ENCODE measurements at regions of chr16 and their contacts with region 1.

Region 1: GRCh38 chr16:84795329-84796053 is 24.3 kb upstream of the CRISPLD2 start:
- DNase-seq: no peak
- ATAC-seq: no peak
- H3K4me3 ChIP-seq: no peak overlapping the region
- H3K27ac ChIP-seq: no peak overlapping the region
- H3K4me1 ChIP-seq: no peaks in the 10 kb centered on the region
- H3K27me3 ChIP-seq: no peaks in the 10 kb centered on the region
- CTCF ChIP-seq: no peak
- EP300 ChIP-seq: no peak
- POLR2A ChIP-seq: no peak
- RAD21 ChIP-seq: no peak

Region 2: GRCh38 chr16:84746882-84747281 is 48.6 kb before region 1 on chr16:
- CTCF ChIA-PET with region 1: no interaction called
- POLR2A ChIA-PET with region 1: no interaction called
- in situ Hi-C with region 1: loop called (anchors 5 kb)
- intact Hi-C with region 1: no loop called
- DNase-seq: no peak
- ATAC-seq: peak; percentile 65
- H3K4me3 ChIP-seq: no peak overlapping the region
- H3K27ac ChIP-seq: no peak overlapping the region
- H3K4me1 ChIP-seq: no peaks in the 10 kb centered on the region
- H3K27me3 ChIP-seq: no peaks in the 10 kb centered on the region
- CTCF ChIP-seq: 0 out of 2 replicates have a peak, but pooled peaks have one; percentile 29
- EP300 ChIP-seq: no peak
- POLR2A ChIP-seq: no peak
- RAD21 ChIP-seq: no peak

Region 3: GRCh38 chr16:84810518-84811273 is 15.2 kb after region 1 on chr16:
- CTCF ChIA-PET with region 1: no interaction called
- POLR2A ChIA-PET with region 1: no interaction called
- in situ Hi-C with region 1: no loop called
- intact Hi-C with region 1: loop called (anchors 1 kb)
- DNase-seq: no peak
- ATAC-seq: no peak
- H3K4me3 ChIP-seq: no peak overlapping the region
- H3K27ac ChIP-seq: no peak overlapping the region
- H3K4me1 ChIP-seq: peaks cover 11% of the 10 kb centered on the region
- H3K27me3 ChIP-seq: peaks cover 7 to 89% of the 10 kb centered on the region in 2 experiments; a peak in 4 of 5 replicates
- CTCF ChIP-seq: no peak
- EP300 ChIP-seq: no peak
- POLR2A ChIP-seq: no peak
- RAD21 ChIP-seq: no peak

Measured in HepG2 (cell line).